ENCODE measurements at regions of chr9 and their contacts with region 1.

Region 1: GRCh38 chr9:4762108-4762885 is 21.3 kb upstream of the AK3 start:
- DNase-seq: peak; percentile 60
- CTCF ChIP-seq: peak; percentile 88

Region 2: DNA sequence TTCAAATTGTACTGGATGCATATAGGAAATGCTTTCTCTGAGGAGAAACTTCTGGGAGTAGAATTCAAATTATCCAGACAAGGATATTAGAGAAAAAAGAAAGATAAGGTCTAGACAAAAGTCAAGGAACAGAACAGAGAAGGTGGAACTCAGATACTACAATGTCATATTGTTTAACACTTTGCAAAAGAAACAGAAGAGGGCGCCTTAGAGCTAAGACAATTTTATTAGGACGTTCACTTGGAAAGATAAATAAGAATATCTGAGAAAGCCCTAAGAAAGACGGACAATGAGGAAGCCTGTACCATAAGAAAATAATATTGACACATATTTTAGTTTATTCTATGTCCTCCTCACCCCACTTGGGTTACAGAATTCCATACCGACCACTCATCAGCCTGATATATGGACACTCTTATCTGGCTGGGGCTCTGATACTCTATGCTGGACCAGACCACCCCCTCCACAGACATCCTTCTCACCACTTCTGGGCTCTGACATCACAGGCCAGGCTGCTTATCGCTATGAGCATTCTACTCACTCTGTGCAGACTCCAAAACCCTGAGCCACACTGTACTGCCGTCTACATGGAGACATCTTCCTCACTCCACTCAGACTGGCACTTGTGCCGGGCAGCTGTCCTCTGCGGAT is 12.1 kb before region 1 on chr9:
- CTCF ChIA-PET with region 1: interaction called, 110 read pairs
- POLR2A ChIA-PET with region 1: no interaction called
- DNase-seq: peak; percentile 36
- CTCF ChIP-seq: peak; percentile 61

Region 3: GRCh38 chr9:4904322-4905134 is 142.2 kb after region 1 on chr9:
- CTCF ChIA-PET with region 1: no interaction called
- POLR2A ChIA-PET with region 1: no interaction called
- DNase-seq: no peak
- CTCF ChIP-seq: no peak

Region 4: GRCh38 chr9:4923580-4924544 is 161.6 kb after region 1 on chr9:
- CTCF ChIA-PET with region 1: interaction called, 11 read pairs
- POLR2A ChIA-PET with region 1: no interaction called
- DNase-seq: peak; percentile 67
- CTCF ChIP-seq: peak; percentile 60

Region 5: GRCh38 chr9:4984621-4985385 is 222.5 kb after region 1 on chr9 and contains the start of gene JAK2:
- CTCF ChIA-PET with region 1: interaction called, 71 read pairs
- POLR2A ChIA-PET with region 1: no interaction called
- DNase-seq: peak; percentile 77
- CTCF ChIP-seq: peak; percentile 65

Region 6: GRCh38 chr9:5593904-5594303 is 831.6 kb after region 1 on chr9:
- CTCF ChIA-PET with region 1: interaction called, 18 read pairs
- POLR2A ChIA-PET with region 1: no interaction called
- DNase-seq: peak; percentile 58
- CTCF ChIP-seq: no peak

Measured in GM10248 (cell line).